ENCODE measurements at regions of chr13 and their contacts with region 1.

Region 1: DNA sequence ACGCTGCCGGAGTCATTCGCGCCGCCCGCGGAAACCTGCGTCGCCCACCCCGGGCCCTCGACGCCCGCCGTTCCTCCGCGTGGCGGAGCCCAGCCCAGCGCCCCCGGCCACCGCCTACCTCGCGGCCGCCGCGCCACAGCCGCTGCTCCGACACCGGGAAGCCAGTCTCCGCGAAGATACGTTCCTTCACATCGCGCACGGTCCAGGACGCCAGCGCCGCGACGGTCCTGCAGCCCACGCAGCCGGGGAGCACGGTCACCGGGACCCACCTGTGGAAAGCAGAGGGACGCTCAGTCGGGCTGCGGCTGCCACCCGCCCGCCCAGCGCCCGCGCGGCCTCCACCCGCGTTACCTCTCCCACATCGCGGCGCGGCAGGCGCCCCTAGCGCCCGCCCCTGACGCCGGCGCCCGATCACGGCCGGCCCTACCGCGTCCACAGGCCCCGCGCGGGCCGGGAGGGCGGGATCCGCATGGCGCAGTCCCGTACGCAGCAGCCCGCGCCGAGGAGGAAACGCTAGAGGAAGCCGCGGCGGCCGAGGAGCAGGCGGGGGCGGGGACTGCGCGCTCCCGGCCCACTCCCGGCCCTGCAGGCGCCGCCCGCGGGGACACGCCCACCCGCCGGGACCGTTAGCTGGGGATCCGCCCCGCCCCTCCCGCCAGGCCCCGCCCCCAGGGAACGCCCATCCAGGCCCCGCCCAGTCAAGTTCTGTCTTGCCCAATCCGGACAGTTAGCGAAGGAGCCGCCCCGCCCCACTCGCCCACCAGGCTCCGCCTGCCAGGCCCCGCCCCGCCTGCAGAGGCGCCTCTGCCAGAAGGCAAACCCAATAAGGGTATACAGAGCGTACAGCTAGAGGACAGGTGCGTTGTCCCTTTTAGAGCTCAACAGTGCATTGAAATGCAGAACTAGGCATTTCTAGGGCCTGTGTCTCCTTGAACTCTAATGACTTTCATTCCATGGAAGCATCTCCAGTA is 58.2 kb downstream of the SACS start:
- DNase-seq: peak; percentile 93
- H3K4me3 ChIP-seq: peak overlapping the region; percentile 89
- H3K27ac ChIP-seq: no peak overlapping the region
- H3K4me1 ChIP-seq: peaks cover 34% of the 10 kb centered on the region
- CTCF ChIP-seq: peak; percentile 33; the same call in 1 of the 2 replicates

Region 2: GRCh38 chr13:21670883-21671619 is 1704.2 kb before region 1 on chr13 and contains the start of gene FGF9:
- CTCF ChIA-PET with region 1: no interaction called
- POLR2A ChIA-PET with region 1: no interaction called
- intact Hi-C with region 1: loop called (anchors 10 kb)
- DNase-seq: peak; percentile 92
- H3K4me3 ChIP-seq: peak within 1 kb of the TSS; percentile 90
- H3K27ac ChIP-seq: peak within 1 kb of the TSS; percentile 72
- H3K4me1 ChIP-seq: peaks cover 41% of the 10 kb centered on the region
- CTCF ChIP-seq: no peak
- total RNA-seq, gene FGF9: 2.2 and 4.7 TPM in 2 replicates

Region 3: GRCh38 chr13:23391752-23392151 is 16.5 kb after region 1 on chr13:
- CTCF ChIA-PET with region 1: no interaction called
- POLR2A ChIA-PET with region 1: no interaction called
- intact Hi-C with region 1: no loop called
- DNase-seq: no peak
- H3K4me3 ChIP-seq: no peak overlapping the region
- H3K27ac ChIP-seq: no peak overlapping the region
- H3K4me1 ChIP-seq: no peaks in the 10 kb centered on the region
- CTCF ChIP-seq: no peak

Region 4: GRCh38 chr13:23579072-23579895 is 204.0 kb after region 1 on chr13:
- CTCF ChIA-PET with region 1: no interaction called
- POLR2A ChIA-PET with region 1: no interaction called
- intact Hi-C with region 1: loop called (anchors 2 kb)
- DNase-seq: peak; percentile 75
- H3K4me3 ChIP-seq: peak overlapping the region; percentile 64
- H3K27ac ChIP-seq: no peak overlapping the region
- H3K4me1 ChIP-seq: no peaks in the 10 kb centered on the region
- CTCF ChIP-seq: no peak

Region 5: GRCh38 chr13:23810685-23811240 is 435.5 kb after region 1 on chr13:
- CTCF ChIA-PET with region 1: no interaction called
- POLR2A ChIA-PET with region 1: no interaction called
- intact Hi-C with region 1: loop called (anchors 10 kb)
- DNase-seq: peak; percentile 75
- H3K4me3 ChIP-seq: no peak overlapping the region
- H3K27ac ChIP-seq: peak overlapping the region; percentile 44
- H3K4me1 ChIP-seq: peaks cover 56% of the 10 kb centered on the region
- CTCF ChIP-seq: peak; percentile 86

Region 6: GRCh38 chr13:23888658-23889614 is 513.6 kb after region 1 on chr13 and contains the start of gene MIPEP:
- CTCF ChIA-PET with region 1: no interaction called
- POLR2A ChIA-PET with region 1: no interaction called
- intact Hi-C with region 1: loop called (anchors 10 kb)
- DNase-seq: peak; percentile 95
- H3K4me3 ChIP-seq: peak within 1 kb of the TSS; percentile 92
- H3K27ac ChIP-seq: peak within 1 kb of the TSS; percentile 38
- H3K4me1 ChIP-seq: peaks cover 14% of the 10 kb centered on the region
- CTCF ChIP-seq: peak; percentile 80
- total RNA-seq, gene MIPEP: 13.5 and 15.5 TPM in 2 replicates

Measured in OCI-LY7 (cell line).